Esophagus muscularis mucosa (tissue), 4 donors: ENCODE measurements at regions of chr11 and their contacts with region 1.

Region 1: DNA sequence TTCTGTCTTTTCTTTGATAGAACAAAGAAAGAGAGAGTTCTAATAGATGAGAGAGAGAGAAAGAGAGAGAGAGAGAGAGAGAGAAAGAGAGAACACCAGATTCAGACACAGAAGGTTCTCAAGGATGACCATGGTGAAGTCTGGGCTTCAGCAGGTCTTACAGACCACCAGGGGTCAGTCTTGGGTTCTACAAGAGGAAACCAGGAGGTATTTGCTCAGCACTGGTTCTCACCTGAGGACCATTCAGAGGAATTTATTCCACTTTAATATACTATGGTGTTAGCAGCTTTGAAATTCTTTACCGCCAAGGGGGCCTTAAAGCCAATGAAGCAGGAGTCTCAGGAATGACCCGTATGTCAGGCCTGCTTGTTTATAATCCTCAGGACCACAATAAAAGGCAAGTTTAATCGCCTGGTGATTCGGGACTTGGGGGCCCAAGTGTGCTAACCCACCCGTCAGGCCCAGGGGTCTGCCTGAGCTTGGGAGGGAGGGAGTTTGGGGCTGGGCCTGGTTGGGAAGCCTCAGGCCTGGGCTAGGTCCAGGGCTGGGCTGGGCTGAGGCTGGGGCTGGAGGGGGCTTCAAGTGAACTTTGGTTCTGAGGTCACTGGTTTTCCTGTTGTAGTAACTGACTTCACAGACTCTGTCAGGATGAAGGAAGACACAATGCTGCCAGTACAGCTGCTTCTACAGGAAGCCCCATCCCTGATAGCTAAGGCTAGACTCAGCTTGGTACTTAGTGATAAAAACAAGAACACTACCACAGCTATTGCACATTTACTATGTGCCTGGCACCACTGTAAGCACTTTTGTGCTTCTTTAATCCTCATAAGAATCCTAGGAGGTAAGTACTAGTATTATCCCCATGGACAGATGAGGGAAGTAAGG is 179.2 kb upstream of the ZBED5 start:
- DNase-seq: peak; percentile 26
- H3K4me3 ChIP-seq: no peak overlapping the region
- H3K27ac ChIP-seq: peak overlapping the region; percentile 69 to 80 (median 78)
- H3K4me1 ChIP-seq: peaks cover 9 to 39% (median 35%) of the 10 kb centered on the region in 4 donors
- H3K27me3 ChIP-seq: no peaks in the 10 kb centered on the region
- CTCF ChIP-seq: peak; percentile 64 to 82 (median 78)
- EP300 ChIP-seq: no peak
- POLR2A ChIP-seq: no peak

Region 2: DNA sequence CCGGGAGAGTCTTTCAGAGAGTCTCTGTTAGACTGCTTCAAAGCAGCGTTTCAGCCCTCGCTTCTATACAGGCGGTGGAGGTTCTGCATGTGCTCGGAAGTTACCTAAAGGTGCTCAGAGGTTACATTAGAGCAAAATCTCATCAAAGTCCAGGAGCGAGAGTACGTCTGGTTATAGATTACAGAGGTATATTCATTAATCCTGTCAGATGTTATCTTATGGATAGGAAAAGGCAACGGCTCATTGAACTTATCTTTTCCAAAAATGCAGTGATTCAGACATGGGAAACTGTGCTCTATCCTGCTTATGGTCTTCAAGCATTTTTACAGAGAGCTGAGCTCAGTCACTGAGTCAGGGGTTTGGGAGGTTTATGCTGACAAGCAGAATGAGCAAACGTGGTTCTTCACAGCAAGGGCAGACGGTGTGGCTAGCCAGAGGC is 170.2 kb before region 1 on chr11:
- intact Hi-C with region 1: no loop called
- DNase-seq: no peak
- H3K4me3 ChIP-seq: no peak overlapping the region
- H3K27ac ChIP-seq: peak overlapping the region; percentile 1 to 49 (median 40)
- H3K4me1 ChIP-seq: peaks cover 7 to 49% (median 36%) of the 10 kb centered on the region in 4 donors
- H3K27me3 ChIP-seq: no peaks in the 10 kb centered on the region
- CTCF ChIP-seq: no peak
- EP300 ChIP-seq: no peak
- POLR2A ChIP-seq: no peak

Region 3: GRCh38 chr11:11081776-11082175 is 44.7 kb after region 1 on chr11:
- intact Hi-C with region 1: loop called (anchors 5 kb)
- DNase-seq: no peak
- H3K4me3 ChIP-seq: no peak overlapping the region
- H3K27ac ChIP-seq: peak overlapping the region; percentile 29 to 57 (median 46)
- H3K4me1 ChIP-seq: peaks cover 6 to 35% (median 25%) of the 10 kb centered on the region in 4 donors
- H3K27me3 ChIP-seq: no peaks in the 10 kb centered on the region
- CTCF ChIP-seq: no peak
- EP300 ChIP-seq: no peak
- POLR2A ChIP-seq: no peak

Region 4: GRCh38 chr11:11148104-11148509 is 111.0 kb after region 1 on chr11:
- intact Hi-C with region 1: loop called (anchors 5 kb)
- DNase-seq: peak; percentile 94
- H3K4me3 ChIP-seq: no peak overlapping the region
- H3K27ac ChIP-seq: peak overlapping the region; percentile 69 to 83 (median 82)
- H3K4me1 ChIP-seq: peaks cover 16 to 46% (median 36%) of the 10 kb centered on the region in 4 donors
- H3K27me3 ChIP-seq: no peaks in the 10 kb centered on the region
- CTCF ChIP-seq: peak; percentile 46 to 66 (median 59)
- EP300 ChIP-seq: no peak
- POLR2A ChIP-seq: no peak

Region 5: GRCh38 chr11:11265994-11266606 is 229.0 kb after region 1 on chr11:
- intact Hi-C with region 1: loop called (anchors 5 kb)
- DNase-seq: no peak
- H3K4me3 ChIP-seq: no peak overlapping the region
- H3K27ac ChIP-seq: no peak overlapping the region
- H3K4me1 ChIP-seq: peaks cover 6 to 37% (median 22%) of the 10 kb centered on the region in 4 donors
- H3K27me3 ChIP-seq: no peaks in the 10 kb centered on the region
- CTCF ChIP-seq: peak; percentile 62 to 89 (median 79)
- EP300 ChIP-seq: no peak
- POLR2A ChIP-seq: no peak

Region 6: GRCh38 chr11:11621573-11622319 is 584.7 kb after region 1 on chr11 and contains the start of gene GALNT18:
- intact Hi-C with region 1: loop called (anchors 10 kb)
- DNase-seq: peak; percentile 93
- H3K4me3 ChIP-seq: peak within 1 kb of the TSS; percentile 64 to 71 (median 68)
- H3K27ac ChIP-seq: peak within 1 kb of the TSS; percentile 75 to 89 (median 82)
- H3K4me1 ChIP-seq: peaks cover 29 to 67% (median 66%) of the 10 kb centered on the region in 4 donors
- H3K27me3 ChIP-seq: no peaks in the 10 kb centered on the region
- CTCF ChIP-seq: peak; percentile 35 to 56 (median 44)
- EP300 ChIP-seq: no peak
- POLR2A ChIP-seq: no peak
- total RNA-seq, gene GALNT18: 29.1 to 67.0 (median 49.3) TPM